Activated CD4-positive, alpha-beta memory T cell treated with anti-CD3 and anti-CD28 coated beads for 36 hours (primary cell): ENCODE measurements at regions of chr11 and their contacts with region 1.

Region 1: GRCh38 chr11:74398244-74399159 is at the start of gene PGM2L1:
- DNase-seq: peak; percentile 94
- H3K4me3 Mint-ChIP-seq: peak within 1 kb of the TSS; percentile 90
- H3K27ac Mint-ChIP-seq: peak within 1 kb of the TSS; percentile 94
- H3K4me1 Mint-ChIP-seq: peaks cover 38% of the 10 kb centered on the region
- H3K27me3 Mint-ChIP-seq: no peaks in the 10 kb centered on the region
- total RNA-seq, gene PGM2L1: 7.0 to 7.2 TPM

Region 2: GRCh38 chr11:73597956-73598718 is 800.4 kb before region 1 on chr11 and contains the start of gene FAM168A:
- CTCF ChIA-PET with region 1: no interaction called
- POLR2A ChIA-PET with region 1: no interaction called
- intact Hi-C with region 1: loop called (anchors 1 kb)
- DNase-seq: peak; percentile 95
- H3K4me3 Mint-ChIP-seq: peak within 1 kb of the TSS; percentile 86
- H3K27ac Mint-ChIP-seq: peak within 1 kb of the TSS; percentile 84
- H3K4me1 Mint-ChIP-seq: peaks cover 29% of the 10 kb centered on the region
- H3K27me3 Mint-ChIP-seq: no peaks in the 10 kb centered on the region
- total RNA-seq, gene FAM168A: 12.2 TPM

Region 3: DNA sequence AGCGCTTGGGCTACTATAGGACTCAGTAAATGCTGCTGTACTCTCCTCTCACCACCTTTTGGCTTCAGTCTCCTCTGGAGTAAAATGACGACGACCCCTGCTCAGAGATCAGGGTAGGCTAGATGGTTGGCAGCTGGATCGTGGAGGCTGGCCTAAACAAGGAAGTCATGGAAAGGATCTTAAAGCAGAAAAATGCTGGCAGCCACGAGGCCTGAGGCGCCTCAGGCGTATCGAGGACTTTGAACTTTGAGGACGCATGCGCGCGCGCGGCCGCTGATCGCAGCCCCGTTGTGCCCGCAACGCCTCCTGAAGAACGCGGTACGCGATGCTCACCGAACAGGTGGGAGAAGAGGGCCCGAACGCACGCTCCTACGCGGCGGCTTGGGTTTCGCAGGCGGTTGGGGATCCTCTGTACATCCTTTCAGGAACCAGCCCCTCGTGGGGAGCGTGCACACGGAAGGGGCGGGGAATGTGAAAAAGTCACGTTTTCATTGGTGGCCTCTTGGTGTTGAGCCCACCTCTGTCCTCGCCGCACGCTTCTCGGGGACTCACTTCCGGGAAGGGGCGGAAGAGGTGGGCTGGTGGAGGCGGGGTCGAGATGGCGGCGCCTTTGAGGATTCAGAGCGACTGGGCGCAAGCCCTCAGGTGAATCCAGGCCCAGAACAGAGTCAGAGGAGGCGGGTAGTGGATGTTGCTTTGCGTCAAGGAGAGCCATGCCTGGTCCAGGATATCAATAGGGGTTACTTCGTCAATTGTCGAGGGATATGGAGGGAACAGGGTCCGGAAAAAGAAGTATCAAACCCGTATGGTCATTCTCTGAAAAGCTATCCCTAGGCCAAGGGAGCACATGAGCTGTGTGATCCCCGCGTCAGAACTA is 521.8 kb before region 1 on chr11 and contains the starts of genes COA4 and PAAF1:
- CTCF ChIA-PET with region 1: no interaction called
- POLR2A ChIA-PET with region 1: no interaction called
- intact Hi-C with region 1: loop called (anchors 1 kb)
- DNase-seq: peak; percentile 97
- H3K4me3 Mint-ChIP-seq: peak within 1 kb of the TSS; percentile 97
- H3K27ac Mint-ChIP-seq: peak within 1 kb of the TSS; percentile 94
- H3K4me1 Mint-ChIP-seq: peaks cover 33% of the 10 kb centered on the region
- H3K27me3 Mint-ChIP-seq: no peaks in the 10 kb centered on the region
- total RNA-seq, gene COA4: 89.5 to 91.6 TPM
- total RNA-seq, gene PAAF1: 29.9 to 33.8 TPM

Region 4: GRCh38 chr11:74170694-74171629 is 227.5 kb before region 1 on chr11 and contains the starts of genes C2CD3 and PPME1:
- CTCF ChIA-PET with region 1: no interaction called
- POLR2A ChIA-PET with region 1: no interaction called
- intact Hi-C with region 1: loop called (anchors 1 kb)
- DNase-seq: peak; percentile 99
- H3K4me3 Mint-ChIP-seq: no peak within 1 kb of the TSS
- H3K27ac Mint-ChIP-seq: no peak within 1 kb of the TSS
- H3K4me1 Mint-ChIP-seq: peaks cover 18% of the 10 kb centered on the region
- H3K27me3 Mint-ChIP-seq: no peaks in the 10 kb centered on the region
- total RNA-seq, gene C2CD3: 22.6 to 24.7 TPM
- total RNA-seq, gene PPME1: 37.9 to 38.5 TPM

Region 5: DNA sequence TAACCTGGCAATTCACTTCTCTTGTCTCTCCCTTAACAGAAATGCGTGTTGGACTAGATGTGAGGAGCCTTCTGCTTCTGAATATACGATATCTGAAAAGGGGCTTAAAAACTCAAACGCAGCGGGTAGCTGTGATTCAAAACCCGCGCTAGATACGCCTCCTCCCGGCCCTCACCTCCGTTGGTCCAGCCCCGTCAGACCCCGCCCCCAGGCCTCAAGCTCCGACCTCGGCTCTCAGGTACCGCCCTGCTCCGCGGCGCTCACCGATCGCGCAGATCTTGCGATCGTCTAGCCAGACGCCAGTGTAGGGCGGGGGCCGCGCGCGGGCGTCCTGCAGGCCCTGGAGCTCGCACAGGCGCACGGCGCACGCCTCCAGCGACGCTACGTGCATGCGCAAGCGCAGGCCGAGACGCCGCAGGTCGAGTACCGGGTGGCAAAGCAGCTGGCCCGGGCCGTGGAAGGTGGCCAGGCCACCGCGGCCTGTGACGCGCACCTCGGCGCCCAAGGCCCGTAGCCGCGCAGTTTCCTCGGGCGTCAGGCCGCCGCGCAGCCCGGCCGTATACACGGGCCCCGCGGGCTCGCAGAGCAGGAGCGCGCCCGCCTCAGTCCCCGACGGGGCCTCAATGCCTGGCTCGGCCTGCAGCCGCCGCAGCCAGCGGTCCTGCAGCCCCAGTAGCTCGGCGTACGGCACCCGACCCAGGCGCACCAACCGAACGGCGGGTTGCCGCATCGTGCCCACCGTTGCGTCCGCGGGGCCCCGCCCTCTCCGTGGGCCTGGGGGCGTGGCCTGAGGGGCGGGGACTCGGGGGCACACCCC is 94.7 kb after region 1 on chr11 and contains the start of gene LIPT2:
- CTCF ChIA-PET with region 1: interaction called, 5 read pairs
- POLR2A ChIA-PET with region 1: interaction called, 4 read pairs
- intact Hi-C with region 1: loop called (anchors 1 kb)
- DNase-seq: peak; percentile 99
- H3K4me3 Mint-ChIP-seq: peak within 1 kb of the TSS; percentile 81
- H3K27ac Mint-ChIP-seq: peak within 1 kb of the TSS; percentile 91
- H3K4me1 Mint-ChIP-seq: peaks cover 22% of the 10 kb centered on the region
- H3K27me3 Mint-ChIP-seq: no peaks in the 10 kb centered on the region
- total RNA-seq, gene LIPT2: 3.0 to 3.3 TPM

Region 6: GRCh38 chr11:74592441-74593362 is 194.2 kb after region 1 on chr11 and contains the start of gene POLD3:
- CTCF ChIA-PET with region 1: no interaction called
- POLR2A ChIA-PET with region 1: interaction called, 3 read pairs
- intact Hi-C with region 1: loop called (anchors 2 kb)
- DNase-seq: peak; percentile 97
- H3K4me3 Mint-ChIP-seq: peak within 1 kb of the TSS; percentile 98
- H3K27ac Mint-ChIP-seq: peak within 1 kb of the TSS; percentile 96
- H3K4me1 Mint-ChIP-seq: peaks cover 35% of the 10 kb centered on the region
- H3K27me3 Mint-ChIP-seq: no peaks in the 10 kb centered on the region
- total RNA-seq, gene POLD3: 60.8 to 61.4 TPM

Region 7: DNA sequence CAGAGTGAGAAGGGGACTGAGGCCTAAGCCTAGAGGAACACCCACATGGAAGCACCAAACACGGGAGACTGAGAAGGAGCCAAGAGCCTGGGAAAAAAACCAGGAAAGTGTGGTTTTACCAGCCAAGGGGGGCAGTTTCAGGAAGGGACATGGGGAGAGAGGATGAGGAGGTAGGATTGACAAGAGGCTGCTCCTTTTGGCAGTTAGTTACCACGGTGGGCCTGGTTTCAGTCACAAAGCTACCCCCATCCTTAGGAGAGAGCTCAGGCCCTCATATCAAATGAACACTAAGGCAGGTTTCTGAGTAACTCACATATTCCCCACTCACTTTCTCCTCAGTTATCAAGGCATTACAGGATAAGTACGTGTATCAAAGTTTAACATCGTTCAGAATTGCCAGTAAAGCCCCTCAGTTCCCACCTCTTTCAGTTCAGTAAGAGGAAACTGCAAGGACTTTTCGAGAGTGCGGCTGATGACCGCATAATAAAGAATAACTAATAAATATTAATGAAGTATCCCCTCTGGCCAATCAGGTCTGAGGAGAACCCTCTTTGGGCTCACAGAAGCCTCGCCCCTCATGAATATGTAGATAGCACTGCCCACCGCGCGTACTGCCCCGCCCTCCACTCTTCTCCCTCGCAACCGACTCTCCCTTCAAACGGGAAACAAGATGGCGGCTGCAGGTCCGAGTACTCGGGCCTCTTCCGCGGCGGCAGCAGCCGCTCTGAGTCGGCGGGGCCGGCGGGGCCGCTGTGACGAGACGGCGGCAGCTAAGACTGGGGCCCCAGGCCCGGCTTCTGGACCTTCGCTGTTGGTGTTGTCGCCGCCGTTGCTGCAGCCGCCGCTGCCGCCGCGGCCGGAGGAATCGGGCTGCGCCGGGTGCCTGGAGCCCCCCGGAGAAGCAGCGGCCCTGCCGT is 350.0 kb after region 1 on chr11 and contains the start of gene RNF169:
- CTCF ChIA-PET with region 1: no interaction called
- POLR2A ChIA-PET with region 1: no interaction called
- intact Hi-C with region 1: loop called (anchors 10 kb)
- DNase-seq: peak; percentile 94
- H3K4me3 Mint-ChIP-seq: peak within 1 kb of the TSS; percentile 91
- H3K27ac Mint-ChIP-seq: peak within 1 kb of the TSS; percentile 74
- H3K4me1 Mint-ChIP-seq: peaks cover 33% of the 10 kb centered on the region
- H3K27me3 Mint-ChIP-seq: no peaks in the 10 kb centered on the region
- total RNA-seq, gene RNF169: 14.3 to 14.9 TPM